Right cardiac atrium (tissue), 5 donors: ENCODE measurements at regions of chr1 and their contacts with region 1.

Region 1: GRCh38 chr1:57218487-57219079 is 205.3 kb downstream of the DAB1 start:
- DNase-seq: peak in 2 of 3 donors; percentile 51 to 66
- ATAC-seq: peak; percentile 74 to 79
- H3K4me3 ChIP-seq: no peak overlapping the region
- H3K27ac ChIP-seq: no peak overlapping the region
- H3K4me1 ChIP-seq: no peaks in the 10 kb centered on the region
- H3K27me3 ChIP-seq: no peaks in the 10 kb centered on the region

Region 2: GRCh38 chr1:57124768-57125446 is 93.7 kb before region 1 on chr1:
- intact Hi-C with region 1: no loop called
- DNase-seq: no peak
- ATAC-seq: no peak
- H3K4me3 ChIP-seq: no peak overlapping the region
- H3K27ac ChIP-seq: no peak overlapping the region
- H3K4me1 ChIP-seq: no peaks in the 10 kb centered on the region
- H3K27me3 ChIP-seq: no peaks in the 10 kb centered on the region

Region 3: DNA sequence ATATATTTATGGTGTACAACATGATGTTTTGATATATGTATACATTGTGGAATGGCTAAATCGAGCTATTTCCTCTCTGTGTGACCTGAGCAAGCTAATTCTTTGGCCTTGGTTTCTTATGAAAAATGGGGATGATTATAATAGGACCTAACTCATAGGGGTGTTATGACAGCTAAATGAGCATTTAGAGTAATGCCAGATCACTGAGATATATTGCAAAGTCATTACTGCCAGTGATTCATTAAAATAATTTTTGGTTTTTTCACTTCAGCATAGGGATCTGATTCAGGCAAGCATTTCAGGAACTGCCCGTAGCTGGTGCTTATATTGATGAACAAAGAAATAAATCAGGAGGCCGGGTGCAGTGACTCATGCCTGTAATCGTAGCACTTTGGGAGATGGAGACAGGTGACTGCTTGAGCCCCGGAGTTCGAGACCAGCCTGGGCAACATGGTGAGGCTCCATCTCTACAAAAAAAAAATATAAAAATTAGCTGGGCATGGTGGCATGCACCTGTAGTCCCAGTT is 174.5 kb after region 1 on chr1:
- intact Hi-C with region 1: loop called in 1 of 4 experiments (anchors 10 kb)
- DNase-seq: no peak
- ATAC-seq: no peak
- H3K4me3 ChIP-seq: no peak overlapping the region
- H3K27ac ChIP-seq: no peak overlapping the region
- H3K4me1 ChIP-seq: no peaks in the 10 kb centered on the region
- H3K27me3 ChIP-seq: no peaks in the 10 kb centered on the region